Activated CD4-positive, alpha-beta T cell treated with anti-CD3 and anti-CD28 coated beads, Interleukin-2, amount 10 ng/mL, durations not matched to agents 7 days and 5 days (primary cell): ENCODE measurements at regions of chr1 and their contacts with region 1.

Region 1: GRCh38 chr1:156226116-156226538 is 13.3 kb downstream of the PMF1 start:
- DNase-seq: no peak
- H3K4me3 Mint-ChIP-seq: no peak overlapping the region
- H3K27ac Mint-ChIP-seq: peak overlapping the region; percentile 76
- H3K4me1 Mint-ChIP-seq: peaks cover 48% of the 10 kb centered on the region
- H3K27me3 Mint-ChIP-seq: no peaks in the 10 kb centered on the region

Region 2: DNA sequence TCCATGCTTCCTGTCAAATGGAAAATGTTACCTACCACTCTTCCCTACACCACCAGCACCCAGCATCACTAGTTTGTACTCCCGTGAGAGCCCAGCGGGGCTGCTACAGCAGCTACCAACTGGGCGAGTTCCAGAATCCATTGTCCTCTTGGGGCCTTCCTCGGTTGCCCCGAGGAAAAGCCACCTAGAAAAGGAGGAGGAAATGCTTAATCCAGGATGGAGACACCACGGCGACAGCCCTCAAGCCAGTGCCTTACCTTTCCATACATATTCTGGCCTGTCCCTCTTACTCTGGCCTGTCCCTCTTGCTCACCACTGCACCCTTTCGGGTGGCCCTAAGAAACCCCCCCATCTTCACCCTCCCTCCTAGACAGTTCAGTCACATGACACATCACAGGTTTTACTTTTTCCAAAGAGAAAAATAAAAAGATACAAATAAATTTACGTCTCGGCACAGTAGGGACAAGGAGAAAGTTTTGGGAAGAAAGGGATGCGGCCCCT is 315.5 kb before region 1 on chr1:
- CTCF ChIA-PET with region 1: no interaction called
- POLR2A ChIA-PET with region 1: no interaction called
- DNase-seq: no peak
- H3K4me3 Mint-ChIP-seq: peak overlapping the region; percentile 98
- H3K27ac Mint-ChIP-seq: peak overlapping the region; percentile 95
- H3K4me1 Mint-ChIP-seq: peaks cover 30% of the 10 kb centered on the region
- H3K27me3 Mint-ChIP-seq: no peaks in the 10 kb centered on the region

Region 3: DNA sequence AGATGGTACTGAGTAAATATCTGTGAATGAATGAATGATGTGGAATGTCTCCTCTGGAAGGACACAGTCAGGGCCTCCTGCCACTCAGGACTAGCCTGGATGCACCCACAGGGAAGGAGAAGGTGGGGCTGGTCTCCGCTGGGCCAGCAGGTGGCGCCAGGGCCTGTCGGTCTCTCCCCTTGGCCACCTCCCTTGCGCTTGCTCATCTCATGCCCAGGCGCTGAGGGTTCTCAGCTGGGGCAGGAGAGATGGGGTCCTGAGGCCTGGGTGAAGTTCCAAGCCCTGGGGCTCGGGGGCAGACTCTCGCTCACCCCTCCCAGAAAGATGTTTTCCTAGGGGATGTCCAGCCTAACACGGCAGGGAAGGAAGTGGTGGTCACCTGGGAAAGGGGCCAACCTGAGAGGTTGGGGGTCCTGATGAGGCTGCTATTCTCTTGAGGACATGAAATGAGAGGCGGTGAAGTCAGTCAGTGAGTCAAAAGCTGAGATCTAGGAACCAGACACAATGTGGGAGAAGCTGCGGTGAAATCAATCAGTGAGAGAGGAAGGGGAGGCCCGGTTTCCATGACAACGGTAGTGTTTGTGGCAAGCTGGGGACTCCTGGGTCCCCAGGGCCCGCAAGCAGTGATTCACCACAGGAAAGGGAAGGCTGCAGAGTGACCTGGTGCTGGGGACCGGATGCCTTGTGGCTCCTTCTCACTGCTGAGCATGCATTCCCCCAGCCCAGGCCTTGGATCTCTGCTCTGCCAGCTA is 129.3 kb before region 1 on chr1:
- CTCF ChIA-PET with region 1: interaction called, 14 read pairs
- POLR2A ChIA-PET with region 1: no interaction called
- DNase-seq: peak; percentile 88
- H3K4me3 Mint-ChIP-seq: peak overlapping the region; percentile 44
- H3K27ac Mint-ChIP-seq: peak overlapping the region; percentile 72
- H3K4me1 Mint-ChIP-seq: peaks cover 44% of the 10 kb centered on the region
- H3K27me3 Mint-ChIP-seq: peaks cover 20% of the 10 kb centered on the region

Region 4: GRCh38 chr1:156140879-156141252 is 85.3 kb before region 1 on chr1:
- CTCF ChIA-PET with region 1: interaction called, 40 read pairs
- POLR2A ChIA-PET with region 1: no interaction called
- DNase-seq: no peak
- H3K4me3 Mint-ChIP-seq: no peak overlapping the region
- H3K27ac Mint-ChIP-seq: no peak overlapping the region
- H3K4me1 Mint-ChIP-seq: peaks cover 8% of the 10 kb centered on the region
- H3K27me3 Mint-ChIP-seq: no peaks in the 10 kb centered on the region

Region 5: GRCh38 chr1:156154317-156154749 is 71.8 kb before region 1 on chr1:
- CTCF ChIA-PET with region 1: interaction called, 42 read pairs
- POLR2A ChIA-PET with region 1: interaction called, 7 read pairs
- DNase-seq: peak; percentile 71
- H3K4me3 Mint-ChIP-seq: peak overlapping the region; percentile 81
- H3K27ac Mint-ChIP-seq: peak overlapping the region; percentile 85
- H3K4me1 Mint-ChIP-seq: peaks cover 71% of the 10 kb centered on the region
- H3K27me3 Mint-ChIP-seq: no peaks in the 10 kb centered on the region

Region 6: GRCh38 chr1:156212833-156213643 is 13.1 kb before region 1 on chr1 and contains the start of gene PMF1:
- CTCF ChIA-PET with region 1: interaction called, 20 read pairs
- POLR2A ChIA-PET with region 1: interaction called, 6 read pairs
- DNase-seq: peak; percentile 98
- H3K4me3 Mint-ChIP-seq: peak within 1 kb of the TSS; percentile 90
- H3K27ac Mint-ChIP-seq: peak within 1 kb of the TSS; percentile 98
- H3K4me1 Mint-ChIP-seq: peaks cover 50% of the 10 kb centered on the region
- H3K27me3 Mint-ChIP-seq: no peaks in the 10 kb centered on the region
- total RNA-seq, gene PMF1: 72.8 to 73.4 TPM

Region 7: DNA sequence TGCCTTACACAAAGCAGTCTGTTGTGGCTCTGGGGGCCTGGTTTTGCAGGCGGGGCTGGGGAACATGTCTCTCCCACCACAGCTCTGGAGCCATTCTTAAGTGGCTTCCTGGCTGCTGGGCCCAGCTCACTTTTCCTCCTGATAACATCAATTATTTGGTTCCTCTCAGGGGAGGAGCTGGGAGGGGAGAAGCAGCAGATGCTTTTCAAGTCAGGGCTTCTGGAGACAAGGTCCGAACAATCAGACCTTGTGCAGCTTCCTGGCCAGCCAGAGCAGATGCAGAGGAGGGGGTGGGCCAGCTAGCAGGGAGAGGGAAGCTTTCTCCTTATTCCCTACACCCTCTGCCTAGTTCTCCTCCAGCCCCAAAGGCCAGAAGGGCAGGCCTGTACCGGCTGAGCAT is 25.4 kb after region 1 on chr1:
- CTCF ChIA-PET with region 1: interaction called, 21 read pairs
- POLR2A ChIA-PET with region 1: no interaction called
- DNase-seq: no peak
- H3K4me3 Mint-ChIP-seq: no peak overlapping the region
- H3K27ac Mint-ChIP-seq: peak overlapping the region; percentile 46
- H3K4me1 Mint-ChIP-seq: peaks cover 19% of the 10 kb centered on the region
- H3K27me3 Mint-ChIP-seq: no peaks in the 10 kb centered on the region